ENCODE measurements at regions of chr1 and their contacts with region 1.

Region 1: GRCh38 chr1:20696397-20697329 is 21.1 kb downstream of the KIF17 start:
- DNase-seq: peak; percentile 58 to 77 (median 64)
- H3K4me3 ChIP-seq: peak overlapping the region; percentile 93
- H3K4me3 Mint-ChIP-seq: peak overlapping the region; percentile 87 to 96 (median 88)
- H3K27ac ChIP-seq: peak overlapping the region; percentile 65
- H3K27ac Mint-ChIP-seq: peak overlapping the region in 4 of 8 donors; percentile 42 to 84 (median 74)
- H3K4me1 ChIP-seq: peaks cover 8% of the 10 kb centered on the region
- H3K4me1 Mint-ChIP-seq: peaks cover 6 to 10% (median 8%) of the 10 kb centered on the region in 3 donors
- H3K27me3 ChIP-seq: no peaks in the 10 kb centered on the region
- H3K27me3 Mint-ChIP-seq: peaks cover 0 to 2% of the 10 kb centered on the region in 2 donors

Region 2: DNA sequence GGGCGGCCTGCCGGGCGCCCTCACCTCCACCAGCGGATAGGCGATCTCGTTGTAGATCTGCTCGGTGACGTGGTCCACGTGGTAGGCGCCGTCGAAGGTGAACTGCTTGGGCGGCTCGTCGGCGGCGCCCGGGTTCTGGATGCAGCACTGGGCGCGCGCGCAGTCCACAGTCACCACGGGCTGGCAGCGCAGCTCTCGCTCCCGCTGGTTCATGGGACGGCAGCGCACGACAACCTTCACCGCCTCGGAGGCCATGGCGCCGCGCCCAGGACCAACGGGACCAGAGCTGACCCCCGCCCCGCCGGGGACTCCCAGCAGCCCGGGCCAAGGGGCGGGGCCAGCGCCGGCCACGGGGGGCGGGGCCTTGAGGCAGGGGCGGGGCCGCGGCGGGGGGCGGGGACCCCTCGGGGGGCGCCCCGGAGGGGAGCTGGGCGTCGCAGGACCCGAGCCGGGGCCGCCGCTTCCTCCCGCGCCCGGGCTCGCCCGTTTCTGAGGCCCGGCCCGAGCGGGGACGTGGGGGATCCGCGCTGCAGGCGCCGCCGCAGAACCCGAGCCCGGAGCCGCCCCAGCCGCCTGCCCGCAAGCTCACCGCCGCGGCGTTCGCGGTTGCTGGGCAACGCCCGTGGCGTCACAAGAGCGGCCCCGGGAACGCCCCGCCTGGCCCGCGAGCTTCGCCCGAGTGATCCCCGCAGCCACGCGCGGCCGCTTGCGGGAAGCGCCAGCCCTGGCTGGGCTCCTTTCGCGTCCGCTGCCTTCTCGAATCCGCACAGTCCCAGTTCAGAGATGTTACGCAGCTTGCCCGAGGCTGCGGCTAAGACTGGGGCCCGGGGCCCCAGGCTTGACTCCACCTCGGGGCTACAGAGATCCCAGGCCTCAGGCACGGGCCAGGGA is 21.0 kb after region 1 on chr1 and contains the start of gene KIF17:
- CTCF ChIA-PET with region 1: interaction called, 11 read pairs
- POLR2A ChIA-PET with region 1: no interaction called
- DNase-seq: peak; percentile 33 to 69 (median 67)
- H3K4me3 ChIP-seq: peak within 1 kb of the TSS; percentile 26
- H3K4me3 Mint-ChIP-seq: peak within 1 kb of the TSS; percentile 50 to 88 (median 73)
- H3K27ac ChIP-seq: no peak within 1 kb of the TSS
- H3K27ac Mint-ChIP-seq: peak within 1 kb of the TSS in 5 of 8 donors; percentile 32 to 66 (median 60)
- H3K4me1 ChIP-seq: no peaks in the 10 kb centered on the region
- H3K4me1 Mint-ChIP-seq: peaks cover 0 to 15% (median 8%) of the 10 kb centered on the region in 3 donors
- H3K27me3 ChIP-seq: no peaks in the 10 kb centered on the region
- H3K27me3 Mint-ChIP-seq: peaks cover 26 to 30% of the 10 kb centered on the region in 2 donors
- total RNA-seq, gene KIF17: not detected

Region 3: DNA sequence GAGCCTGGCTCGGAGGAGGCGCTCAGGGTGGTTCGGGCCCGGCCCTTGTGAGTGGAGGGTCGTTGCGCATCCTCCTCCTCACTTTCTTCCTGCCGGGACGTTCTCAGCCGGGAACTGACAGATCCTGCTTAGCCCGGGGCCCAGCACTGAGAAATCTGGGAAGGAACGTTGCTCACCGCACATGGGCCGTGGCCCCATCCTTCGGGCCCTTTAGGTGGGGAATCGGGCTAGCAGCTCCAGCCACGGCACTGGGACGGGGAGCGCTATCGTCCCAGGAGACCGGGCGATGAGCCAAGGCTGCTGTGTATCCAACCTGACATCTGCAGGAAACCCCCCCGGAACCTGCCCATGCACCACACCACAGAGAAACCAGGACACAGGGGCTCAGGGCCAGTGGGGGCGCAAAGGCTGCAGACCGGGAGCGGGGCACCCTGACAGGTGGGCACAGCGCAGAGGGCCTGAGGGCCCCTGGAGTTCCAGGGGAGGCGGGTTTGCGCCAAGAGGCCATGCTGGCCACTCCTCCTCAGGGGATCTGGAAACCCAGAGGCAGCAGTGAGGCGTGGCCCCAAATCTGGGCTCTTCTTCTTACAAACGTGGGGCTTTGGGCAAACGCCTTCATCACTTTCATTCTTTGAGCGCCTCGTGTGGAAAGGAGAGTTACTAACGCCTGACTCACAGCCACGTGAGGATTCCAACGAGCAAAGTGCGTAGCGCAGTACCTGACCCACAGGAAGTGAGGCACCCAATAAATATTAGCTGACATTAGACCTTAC is 36.1 kb after region 1 on chr1 and contains the start of gene SH2D5:
- CTCF ChIA-PET with region 1: interaction called, 15 read pairs
- POLR2A ChIA-PET with region 1: no interaction called
- DNase-seq: peak; percentile 52 to 83 (median 54)
- H3K4me3 ChIP-seq: peak within 1 kb of the TSS; percentile 83
- H3K4me3 Mint-ChIP-seq: peak within 1 kb of the TSS; percentile 81 to 93 (median 85)
- H3K27ac ChIP-seq: no peak within 1 kb of the TSS
- H3K27ac Mint-ChIP-seq: peak within 1 kb of the TSS in 7 of 8 donors; percentile 1 to 92 (median 68)
- H3K4me1 ChIP-seq: peaks cover 17% of the 10 kb centered on the region
- H3K4me1 Mint-ChIP-seq: peaks cover 14 to 39% (median 21%) of the 10 kb centered on the region in 3 donors
- H3K27me3 ChIP-seq: peaks cover 8% of the 10 kb centered on the region
- H3K27me3 Mint-ChIP-seq: peaks cover 0 to 9% of the 10 kb centered on the region in 2 donors
- total RNA-seq, gene SH2D5: 0.13 to 0.24 TPM

Region 4: GRCh38 chr1:21189906-21190500 is 493.3 kb after region 1 on chr1:
- CTCF ChIA-PET with region 1: interaction called, 84 read pairs
- POLR2A ChIA-PET with region 1: no interaction called
- DNase-seq: no peak
- H3K4me3 ChIP-seq: no peak overlapping the region
- H3K4me3 Mint-ChIP-seq: peak overlapping the region in 1 of 7 donors; percentile 46
- H3K27ac ChIP-seq: no peak overlapping the region
- H3K27ac Mint-ChIP-seq: peak overlapping the region in 1 of 8 donors; percentile 87
- H3K4me1 ChIP-seq: no peaks in the 10 kb centered on the region
- H3K4me1 Mint-ChIP-seq: peaks cover 6 to 12% (median 8%) of the 10 kb centered on the region in 3 donors
- H3K27me3 ChIP-seq: no peaks in the 10 kb centered on the region
- H3K27me3 Mint-ChIP-seq: peaks cover 7 to 8% of the 10 kb centered on the region in 2 donors

Region 5: DNA sequence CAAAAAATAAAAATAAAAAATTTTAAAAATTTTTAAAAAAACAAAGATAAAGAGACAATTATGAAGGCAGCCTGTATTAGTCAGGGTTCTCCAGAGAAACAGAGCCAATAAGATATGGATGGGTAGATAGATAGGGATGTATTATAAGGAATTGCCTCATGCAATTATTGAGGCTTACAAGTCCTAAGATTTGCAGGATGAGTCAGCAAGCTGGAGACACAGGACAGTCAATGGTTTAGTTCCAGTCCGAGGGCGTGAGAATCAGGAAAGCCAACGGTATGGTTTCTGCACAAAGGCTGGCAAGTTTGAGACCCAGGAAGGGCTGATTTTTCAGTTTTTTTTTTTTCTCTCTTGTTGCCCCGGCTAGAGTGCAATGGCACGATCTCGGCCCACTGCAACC is 504.1 kb after region 1 on chr1:
- CTCF ChIA-PET with region 1: interaction called, 84 read pairs
- POLR2A ChIA-PET with region 1: no interaction called
- DNase-seq: no peak
- H3K4me3 ChIP-seq: no peak overlapping the region
- H3K4me3 Mint-ChIP-seq: no peak overlapping the region
- H3K27ac ChIP-seq: no peak overlapping the region
- H3K27ac Mint-ChIP-seq: no peak overlapping the region
- H3K4me1 ChIP-seq: no peaks in the 10 kb centered on the region
- H3K4me1 Mint-ChIP-seq: no peaks in the 10 kb centered on the region
- H3K27me3 ChIP-seq: no peaks in the 10 kb centered on the region
- H3K27me3 Mint-ChIP-seq: peaks cover 16% of the 10 kb centered on the region in 2 donors